Colonic mucosa (tissue), 4 donors: ENCODE measurements at regions of chr16 and their contacts with region 1.

Region 1: DNA sequence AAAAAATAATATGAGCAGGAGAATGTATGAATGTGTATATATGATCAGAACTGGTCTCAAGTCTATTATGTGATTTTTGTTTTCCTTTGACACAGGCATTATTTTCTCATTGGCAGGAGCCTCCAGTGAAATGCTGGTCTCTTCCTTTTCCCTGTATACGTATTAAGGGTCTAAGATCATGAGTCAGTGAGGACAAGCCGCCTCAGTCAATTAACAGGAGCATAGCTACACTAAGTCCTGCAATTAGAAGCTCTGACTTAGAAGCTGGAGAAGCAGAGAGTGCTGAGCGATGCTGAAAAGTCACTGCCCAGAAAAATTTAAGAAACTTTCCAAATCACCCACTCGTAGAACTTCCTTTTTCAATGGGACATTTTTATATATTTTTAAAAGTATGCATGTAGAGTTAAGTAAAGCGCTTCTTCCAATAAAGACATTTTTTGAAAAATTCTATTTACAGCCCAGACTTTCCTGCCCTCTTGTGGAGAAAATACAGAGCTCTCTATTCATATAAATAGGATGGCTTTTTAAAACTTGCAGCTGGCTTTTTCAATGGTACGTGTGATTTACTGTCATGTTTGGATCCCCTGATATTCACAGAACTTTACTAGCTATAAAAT is 70.2 kb upstream of the PSMD7 start:
- DNase-seq: no peak
- H3K4me3 ChIP-seq: no peak overlapping the region
- H3K27ac ChIP-seq: no peak overlapping the region
- H3K4me1 ChIP-seq: no peaks in the 10 kb centered on the region
- H3K27me3 ChIP-seq: no peaks in the 10 kb centered on the region
- CTCF ChIP-seq: no peak

Region 2: DNA sequence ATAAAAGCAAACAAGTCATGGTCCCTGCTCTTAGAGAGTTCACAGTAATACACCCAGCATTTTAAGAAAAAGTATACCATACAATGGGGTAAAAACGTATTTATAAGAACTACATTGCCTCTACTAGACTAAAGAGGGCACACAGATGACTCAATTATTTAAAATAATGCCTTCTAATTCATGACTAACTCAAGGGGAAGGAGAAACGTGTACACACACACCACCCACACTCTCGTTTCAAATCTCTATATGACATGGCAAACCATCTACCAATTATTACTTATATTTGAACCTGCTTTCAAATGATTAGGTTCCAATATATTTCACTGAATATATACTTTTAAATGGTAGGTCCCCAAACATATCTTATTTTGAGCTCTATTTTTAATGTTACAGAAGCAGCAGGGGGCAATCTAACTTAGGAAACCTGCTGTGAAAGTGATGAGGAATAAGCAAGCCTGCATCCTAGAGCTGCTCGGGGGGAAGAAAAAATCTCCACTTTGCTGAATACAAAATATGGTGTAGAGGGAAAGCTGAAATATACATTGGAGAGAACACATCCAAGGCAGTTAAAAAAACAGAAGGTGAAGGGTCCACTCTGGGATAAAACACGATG is 162.2 kb before region 1 on chr16:
- intact Hi-C with region 1: loop called (anchors 5 kb)
- DNase-seq: no peak
- H3K4me3 ChIP-seq: no peak overlapping the region
- H3K27ac ChIP-seq: no peak overlapping the region
- H3K4me1 ChIP-seq: no peaks in the 10 kb centered on the region
- H3K27me3 ChIP-seq: no peaks in the 10 kb centered on the region
- CTCF ChIP-seq: no peak